HCT116 (cell line): ENCODE measurements at regions of chr17 and their contacts with region 1.

Region 1: DNA sequence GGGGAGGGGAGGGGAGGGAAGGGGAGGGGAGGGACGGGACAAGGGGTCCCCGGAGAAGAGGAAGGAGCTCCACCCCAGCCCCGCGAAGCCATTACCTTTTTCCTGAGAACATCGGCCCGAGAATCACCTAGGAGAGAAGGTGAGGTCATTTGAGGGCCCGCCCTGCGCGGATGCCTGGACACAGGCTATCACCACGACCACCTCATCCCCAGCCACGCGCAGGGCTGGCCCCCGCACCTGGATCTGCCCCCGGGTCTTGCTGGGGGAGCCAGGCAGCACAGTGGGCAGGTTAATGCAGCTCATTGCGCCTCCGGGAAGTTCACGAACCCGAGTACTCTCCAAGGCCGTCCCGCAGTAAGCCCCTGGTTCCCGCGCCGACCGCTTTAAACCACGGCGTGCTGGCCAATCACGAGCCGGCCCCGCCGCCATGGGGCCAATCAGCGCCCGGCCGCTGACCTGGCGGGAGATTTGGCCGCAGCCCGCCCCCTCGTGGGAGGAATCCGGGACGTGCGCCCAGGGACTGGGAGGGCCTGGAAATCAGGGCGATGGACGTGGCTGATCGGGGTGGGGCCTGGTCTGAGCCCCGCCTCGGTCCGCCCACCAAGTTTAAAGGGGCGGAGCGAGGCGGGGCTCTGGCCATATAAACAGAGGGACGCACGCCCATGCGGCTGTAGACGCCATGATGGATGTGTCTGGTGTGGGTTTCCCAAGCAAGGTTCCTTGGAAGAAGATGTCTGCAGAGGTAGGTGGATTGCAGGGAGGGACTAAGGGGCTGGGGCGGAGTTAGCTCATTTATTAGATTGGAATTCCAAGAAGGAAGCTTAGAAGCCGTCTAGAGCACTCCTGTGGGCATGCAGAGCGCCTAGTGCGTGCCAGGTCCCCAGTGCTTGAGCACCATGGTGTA is at the starts of genes AFMID and TK1:
- DNase-seq: peak; percentile 99
- ATAC-seq: peak; percentile 88
- H3K4me3 ChIP-seq: peak within 1 kb of the TSS; percentile 94 to 95
- H3K27ac ChIP-seq: peak within 1 kb of the TSS; percentile 78
- H3K4me1 ChIP-seq: peaks cover 22 to 55% of the 10 kb centered on the region in 2 experiments
- H3K27me3 ChIP-seq: no peaks in the 10 kb centered on the region
- CTCF ChIP-seq: peak; percentile 34 to 95 (median 74); a peak in 5 of 6 replicates
- POLR2A ChIP-seq: peak; percentile 99
- RAD21 ChIP-seq: no peak
- total RNA-seq, gene AFMID: 65.8 TPM
- total RNA-seq, gene TK1: 315 TPM

Region 2: GRCh38 chr17:78128551-78129350 is 58.2 kb before region 1 on chr17 and contains the start of gene TMC6:
- CTCF ChIA-PET with region 1: no interaction called
- POLR2A ChIA-PET with region 1: interaction called, 17 read pairs
- RAD21 ChIA-PET with region 1: interaction called in 1 of 2 experiments, 3 read pairs
- intact Hi-C with region 1: no loop called
- DNase-seq: peak; percentile 64
- ATAC-seq: peak; percentile 81
- H3K4me3 ChIP-seq: peak within 1 kb of the TSS; percentile 89 to 92
- H3K27ac ChIP-seq: peak within 1 kb of the TSS; percentile 95
- H3K4me1 ChIP-seq: peaks cover 39 to 62% of the 10 kb centered on the region in 2 experiments
- H3K27me3 ChIP-seq: no peaks in the 10 kb centered on the region
- CTCF ChIP-seq: no peak
- POLR2A ChIP-seq: peak; percentile 19
- RAD21 ChIP-seq: no peak
- total RNA-seq, gene TMC6: 142 TPM

Region 3: DNA sequence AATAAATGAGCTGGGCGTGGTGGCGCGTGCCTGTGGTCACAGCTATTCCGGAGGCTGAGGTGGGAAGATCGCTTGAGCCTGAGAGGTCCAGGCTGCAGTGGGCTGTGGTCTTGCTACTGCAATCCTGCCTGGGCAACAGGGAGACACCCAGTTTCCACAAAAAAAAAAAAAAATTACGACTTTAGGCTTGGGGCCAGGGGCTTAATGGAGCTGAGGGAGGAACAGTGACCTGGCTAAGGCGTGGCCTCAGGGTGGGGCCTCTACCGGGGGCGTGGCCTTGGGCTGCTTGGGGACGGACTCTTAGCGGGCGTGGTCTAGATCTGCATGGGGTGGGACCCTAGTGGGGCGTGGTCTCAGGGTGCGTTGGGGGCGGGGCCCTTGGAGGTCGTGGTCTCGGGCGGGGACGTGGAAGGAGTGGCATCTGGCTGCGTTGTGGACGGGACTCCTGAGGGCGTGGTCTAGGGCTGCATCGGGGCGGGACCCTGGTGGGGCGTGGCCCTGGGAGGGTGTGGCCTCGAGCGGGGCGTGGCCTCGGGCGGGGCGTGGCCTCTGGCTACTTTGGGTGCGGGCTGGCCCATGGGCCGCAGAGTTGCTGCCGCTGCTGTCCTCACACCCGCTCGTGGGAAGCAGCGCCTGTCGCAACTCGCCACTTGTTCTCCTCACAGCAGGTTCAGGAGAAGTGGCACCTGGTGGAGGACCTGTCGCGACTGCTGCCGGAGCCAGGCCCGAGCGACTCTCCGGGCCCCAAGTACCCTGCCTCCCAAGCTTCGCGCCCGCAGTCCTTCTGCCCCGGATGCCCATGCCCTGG is 46.6 kb before region 1 on chr17:
- CTCF ChIA-PET with region 1: interaction called, 7 read pairs
- POLR2A ChIA-PET with region 1: interaction called, 25 read pairs
- RAD21 ChIA-PET with region 1: interaction called, 3 to 4 read pairs
- intact Hi-C with region 1: loop called (anchors 1 kb)
- DNase-seq: peak; percentile 100
- ATAC-seq: peak; percentile 79
- H3K4me3 ChIP-seq: peak overlapping the region; percentile 37 to 53
- H3K27ac ChIP-seq: peak overlapping the region; percentile 75
- H3K4me1 ChIP-seq: peaks cover 57 to 82% of the 10 kb centered on the region in 2 experiments
- H3K27me3 ChIP-seq: no peaks in the 10 kb centered on the region
- CTCF ChIP-seq: no peak
- POLR2A ChIP-seq: no peak
- RAD21 ChIP-seq: no peak

Region 4: DNA sequence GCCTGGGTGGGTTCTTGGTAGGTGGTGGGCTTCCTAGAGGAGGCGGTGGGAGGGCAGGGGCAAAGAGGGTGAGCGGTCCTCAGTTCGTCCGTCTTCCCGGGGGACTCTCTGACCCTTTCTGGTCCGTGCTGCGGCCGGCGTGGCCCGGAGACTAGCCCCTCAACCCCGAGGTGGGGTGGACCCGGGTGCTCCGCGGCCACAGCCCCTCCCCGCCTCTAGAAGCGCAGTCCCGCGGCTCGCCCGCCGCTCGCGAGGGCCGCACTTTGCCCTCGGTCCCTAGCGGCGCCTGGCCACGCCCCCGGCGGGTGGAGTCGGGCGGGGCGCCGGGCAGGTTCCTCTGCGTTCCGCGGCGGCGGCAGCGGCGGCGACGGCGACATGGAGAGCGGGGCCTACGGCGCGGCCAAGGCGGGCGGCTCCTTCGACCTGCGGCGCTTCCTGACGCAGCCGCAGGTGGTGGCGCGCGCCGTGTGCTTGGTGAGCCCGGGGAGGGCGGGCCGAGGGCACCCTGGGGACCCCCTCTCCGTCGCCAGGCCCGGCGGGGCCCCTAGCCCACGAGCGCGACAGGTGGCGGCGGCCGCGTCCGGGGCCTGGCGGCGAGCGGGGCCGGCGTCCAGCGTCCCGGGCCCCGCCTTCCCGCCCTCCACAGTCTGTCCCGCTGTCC is 18.6 kb before region 1 on chr17 and contains the start of gene SYNGR2:
- CTCF ChIA-PET with region 1: interaction called, 8 read pairs
- POLR2A ChIA-PET with region 1: interaction called, 44 read pairs
- RAD21 ChIA-PET with region 1: interaction called in 1 of 2 experiments, 4 read pairs
- intact Hi-C with region 1: loop called (anchors 2 kb)
- DNase-seq: peak; percentile 63
- ATAC-seq: peak; percentile 72
- H3K4me3 ChIP-seq: peak within 1 kb of the TSS; percentile 83
- H3K27ac ChIP-seq: peak within 1 kb of the TSS; percentile 85
- H3K4me1 ChIP-seq: peaks cover 18 to 49% of the 10 kb centered on the region in 2 experiments; a peak in 3 of 4 replicates
- H3K27me3 ChIP-seq: no peaks in the 10 kb centered on the region
- CTCF ChIP-seq: no peak
- POLR2A ChIP-seq: peak; percentile 84
- RAD21 ChIP-seq: no peak
- total RNA-seq, gene SYNGR2: 148 TPM

Region 5: DNA sequence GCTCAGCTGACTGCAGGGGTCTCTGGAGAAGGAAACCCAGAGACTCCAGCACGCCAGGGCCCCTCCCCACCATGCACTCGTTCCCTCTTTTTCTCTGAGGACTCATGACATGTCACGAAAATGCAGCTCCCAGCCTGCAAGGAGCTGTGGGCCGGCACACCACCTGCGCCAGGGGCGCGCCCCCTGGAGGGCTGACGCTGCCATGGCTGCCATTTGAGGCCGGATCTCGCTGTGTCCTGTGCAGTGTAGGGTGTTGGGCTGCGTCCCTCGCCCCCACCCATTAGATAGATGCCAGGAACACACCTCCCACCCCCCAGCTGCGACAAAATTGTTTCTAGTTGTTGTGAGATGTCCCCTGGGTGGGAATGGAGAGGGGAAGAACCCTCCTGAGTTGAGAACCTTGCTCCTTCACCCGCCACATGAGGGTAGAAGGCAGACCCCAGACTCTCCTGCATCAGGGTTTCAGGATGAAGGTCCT is 10.4 kb before region 1 on chr17:
- CTCF ChIA-PET with region 1: interaction called, 14 read pairs
- POLR2A ChIA-PET with region 1: interaction called, 44 read pairs
- RAD21 ChIA-PET with region 1: no interaction called
- intact Hi-C with region 1: no loop called
- DNase-seq: no peak
- ATAC-seq: peak; percentile 78
- H3K4me3 ChIP-seq: no peak overlapping the region
- H3K27ac ChIP-seq: peak overlapping the region; percentile 20
- H3K4me1 ChIP-seq: peaks cover 12 to 30% of the 10 kb centered on the region in 2 experiments; a peak in 3 of 4 replicates
- H3K27me3 ChIP-seq: no peaks in the 10 kb centered on the region
- CTCF ChIP-seq: peak; percentile 81 to 99 (median 99); a peak in 5 of 6 replicates
- POLR2A ChIP-seq: no peak
- RAD21 ChIP-seq: peak; percentile 87

Region 6: GRCh38 chr17:78197147-78197832 is 10.3 kb after region 1 on chr17:
- CTCF ChIA-PET with region 1: interaction called, 11 read pairs
- POLR2A ChIA-PET with region 1: interaction called, 77 read pairs
- RAD21 ChIA-PET with region 1: no interaction called
- intact Hi-C with region 1: no loop called
- DNase-seq: no peak
- ATAC-seq: no peak
- H3K4me3 ChIP-seq: no peak overlapping the region
- H3K27ac ChIP-seq: peak overlapping the region; percentile 79
- H3K4me1 ChIP-seq: peaks cover 21 to 34% of the 10 kb centered on the region in 2 experiments
- H3K27me3 ChIP-seq: no peaks in the 10 kb centered on the region
- CTCF ChIP-seq: no peak
- POLR2A ChIP-seq: no peak
- RAD21 ChIP-seq: no peak

Region 7: GRCh38 chr17:78214706-78215061 is 27.7 kb after region 1 on chr17:
- CTCF ChIA-PET with region 1: no interaction called
- POLR2A ChIA-PET with region 1: interaction called, 6 read pairs
- RAD21 ChIA-PET with region 1: no interaction called
- intact Hi-C with region 1: loop called (anchors 1 kb)
- DNase-seq: no peak
- ATAC-seq: no peak; the same call in 1 of the 2 replicates
- H3K4me3 ChIP-seq: peak overlapping the region; percentile 97 to 99
- H3K27ac ChIP-seq: peak overlapping the region; percentile 86
- H3K4me1 ChIP-seq: peaks cover 13 to 20% of the 10 kb centered on the region in 2 experiments
- H3K27me3 ChIP-seq: no peaks in the 10 kb centered on the region
- CTCF ChIP-seq: no peak
- POLR2A ChIP-seq: no peak
- RAD21 ChIP-seq: no peak

Region 8: DNA sequence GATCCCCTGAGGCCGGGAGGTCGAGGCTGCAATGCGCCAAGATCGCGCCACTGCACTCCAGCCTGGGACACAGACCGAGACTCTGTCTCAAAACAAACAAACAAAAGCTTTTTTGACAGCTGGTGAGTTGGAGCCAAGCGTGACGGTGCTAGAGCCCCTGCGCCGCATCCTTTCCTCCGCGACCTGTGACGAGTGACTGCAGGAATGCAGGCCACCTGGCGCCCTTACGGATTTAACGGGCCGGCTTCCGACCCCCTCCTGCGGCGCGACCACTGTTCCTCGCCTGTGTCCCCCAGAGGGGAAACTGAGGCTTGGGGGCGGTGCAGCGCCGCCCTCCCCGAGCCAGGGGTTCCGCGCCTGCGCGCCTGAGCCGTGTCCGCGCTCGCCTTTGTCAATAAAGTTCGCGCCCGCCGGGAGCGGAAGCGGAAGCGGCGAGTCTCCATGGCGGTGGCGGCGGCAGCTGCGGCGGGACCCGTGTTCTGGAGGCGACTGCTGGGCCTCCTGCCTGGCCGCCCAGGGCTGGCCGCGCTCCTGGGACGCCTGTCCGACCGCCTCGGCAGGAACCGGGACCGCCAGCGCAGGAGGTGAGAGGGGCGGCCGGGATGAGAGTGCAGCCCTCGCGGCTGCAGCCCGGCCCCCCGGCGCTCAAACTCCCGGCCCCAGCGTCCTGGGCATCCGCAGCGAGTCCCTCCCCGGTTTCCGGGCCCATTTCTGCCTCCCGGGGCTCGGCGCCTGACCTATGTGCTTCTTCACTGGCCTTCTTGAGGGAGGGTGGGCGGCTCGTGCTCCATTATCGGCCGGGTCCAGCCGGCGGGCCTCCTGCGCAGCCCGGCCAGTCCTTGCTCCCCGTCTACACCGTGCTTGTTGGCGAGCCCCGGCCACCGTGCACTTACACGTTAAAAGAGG is 191.5 kb after region 1 on chr17 and contains the start of gene PGS1:
- CTCF ChIA-PET with region 1: no interaction called
- POLR2A ChIA-PET with region 1: no interaction called
- RAD21 ChIA-PET with region 1: no interaction called
- intact Hi-C with region 1: no loop called
- DNase-seq: peak; percentile 49
- ATAC-seq: peak; percentile 87
- H3K4me3 ChIP-seq: peak within 1 kb of the TSS; percentile 62 to 86
- H3K27ac ChIP-seq: peak within 1 kb of the TSS; percentile 63
- H3K4me1 ChIP-seq: peaks cover 16 to 36% of the 10 kb centered on the region in 2 experiments
- H3K27me3 ChIP-seq: no peaks in the 10 kb centered on the region
- CTCF ChIP-seq: no peak
- POLR2A ChIP-seq: peak; percentile 57
- RAD21 ChIP-seq: no peak
- total RNA-seq, gene PGS1: 44.4 TPM